Activated naive CD8-positive, alpha-beta T cell treated with anti-CD3 and anti-CD28 coated beads, Interleukin-2, amount 10 ng/mL, durations not matched to agents 7 days and 5 days (primary cell): ENCODE measurements at regions of chr12 and their contacts with region 1.

Region 1: GRCh38 chr12:56359851-56360767 is at the start of gene STAT2:
- DNase-seq: peak; percentile 99
- ATAC-seq: peak; percentile 95
- H3K4me3 Mint-ChIP-seq: peak within 1 kb of the TSS; percentile 98
- H3K27ac Mint-ChIP-seq: peak within 1 kb of the TSS; percentile 98
- H3K4me1 Mint-ChIP-seq: peaks cover 25% of the 10 kb centered on the region
- H3K27me3 Mint-ChIP-seq: no peaks in the 10 kb centered on the region
- total RNA-seq, gene STAT2: 263 to 275 TPM

Region 2: DNA sequence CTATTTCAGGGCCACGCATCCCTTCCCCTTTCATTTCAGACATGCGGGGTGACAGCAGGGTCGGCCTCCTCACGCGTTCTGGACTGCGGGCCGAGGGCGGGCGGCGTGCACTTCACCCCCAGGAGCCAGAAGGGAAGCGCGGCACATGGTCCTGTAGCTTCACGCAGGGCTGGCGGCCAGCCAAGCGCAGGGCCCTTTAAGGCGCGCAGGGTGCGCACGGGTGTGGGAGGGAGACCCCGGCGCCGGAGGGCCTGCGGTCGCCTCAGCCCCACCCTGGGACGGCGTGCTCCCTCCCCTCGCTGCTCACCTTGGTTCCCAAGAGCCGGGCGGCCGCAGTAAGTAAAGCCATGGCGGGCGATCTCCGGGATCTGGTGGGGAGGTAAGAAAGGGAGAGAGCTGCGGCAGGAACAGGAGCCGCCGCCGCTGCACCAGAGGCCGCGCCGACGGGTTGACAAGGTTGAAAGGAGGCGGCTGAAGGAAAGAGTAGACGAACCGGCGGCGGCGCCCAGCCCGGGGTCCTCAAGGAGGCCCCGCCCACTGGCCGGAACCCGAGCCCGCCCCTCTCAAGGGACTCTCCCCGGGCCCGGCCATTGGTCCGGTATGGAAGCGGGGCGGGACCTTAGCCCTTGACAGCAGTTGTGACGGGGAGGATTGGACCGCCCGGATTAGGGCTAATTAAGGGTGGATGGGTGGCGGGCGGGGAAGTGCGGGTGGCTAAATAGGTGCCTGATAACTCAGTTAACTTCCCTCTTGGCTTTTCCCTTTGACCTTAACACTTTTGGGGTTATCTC is 60.1 kb before region 1 on chr12 and contains the start of gene CS:
- POLR2A ChIA-PET with region 1: interaction called, 10 read pairs
- DNase-seq: peak; percentile 98
- ATAC-seq: peak; percentile 96
- H3K4me3 Mint-ChIP-seq: peak within 1 kb of the TSS; percentile 96
- H3K27ac Mint-ChIP-seq: peak within 1 kb of the TSS; percentile 92
- H3K4me1 Mint-ChIP-seq: peaks cover 35% of the 10 kb centered on the region
- H3K27me3 Mint-ChIP-seq: no peaks in the 10 kb centered on the region
- total RNA-seq, gene CS: 165 to 176 TPM

Region 3: DNA sequence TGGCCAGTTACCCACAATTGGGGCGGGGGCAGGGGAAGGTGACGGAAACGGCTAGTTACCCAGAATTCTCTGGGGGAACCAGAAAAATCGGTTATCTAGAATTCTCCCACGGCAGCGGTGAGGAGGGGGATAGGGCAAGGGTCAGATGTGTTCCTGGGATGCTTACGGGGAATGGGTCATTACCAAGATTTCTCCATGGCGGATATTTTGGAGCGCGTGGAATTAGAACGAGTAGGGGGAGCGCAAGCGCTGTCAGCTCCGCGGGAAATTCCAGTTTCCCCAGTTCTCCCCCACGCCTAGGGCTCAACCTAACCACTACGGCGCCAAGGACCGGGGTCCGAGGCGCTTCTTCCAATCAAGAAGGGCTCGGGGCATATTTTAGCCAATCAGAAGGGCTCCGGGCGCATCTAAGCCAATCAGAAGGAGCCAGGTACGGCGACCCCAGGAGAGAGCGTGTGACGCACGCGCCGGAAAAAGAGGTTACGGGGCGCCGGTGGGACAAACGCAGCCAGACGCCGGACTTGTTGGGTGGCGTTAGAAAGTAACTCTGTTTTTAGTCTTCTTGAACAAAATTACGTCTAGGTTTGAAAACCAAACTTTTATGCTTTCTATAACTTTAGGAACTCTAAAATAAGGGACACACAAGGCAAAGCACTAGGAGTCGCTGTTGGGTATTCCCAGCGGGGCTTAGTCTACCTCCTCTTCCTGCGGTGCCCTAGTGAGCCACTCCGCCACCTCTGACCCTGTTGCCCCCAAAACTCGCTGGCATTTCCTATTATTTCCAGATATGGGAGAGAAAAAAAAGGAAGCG is 26.2 kb before region 1 on chr12 and contains the start of gene PAN2:
- POLR2A ChIA-PET with region 1: interaction called, 153 read pairs
- DNase-seq: peak; percentile 89
- ATAC-seq: peak; percentile 91
- H3K4me3 Mint-ChIP-seq: peak within 1 kb of the TSS; percentile 92
- H3K27ac Mint-ChIP-seq: peak within 1 kb of the TSS; percentile 94
- H3K4me1 Mint-ChIP-seq: peaks cover 32% of the 10 kb centered on the region
- H3K27me3 Mint-ChIP-seq: no peaks in the 10 kb centered on the region
- total RNA-seq, gene PAN2: 106 to 115 TPM

Region 4: GRCh38 chr12:56448860-56449621 is 88.9 kb after region 1 on chr12 and contains the start of gene TIMELESS:
- POLR2A ChIA-PET with region 1: interaction called, 27 read pairs
- DNase-seq: peak; percentile 90
- ATAC-seq: peak; percentile 98
- H3K4me3 Mint-ChIP-seq: peak within 1 kb of the TSS; percentile 92
- H3K27ac Mint-ChIP-seq: peak within 1 kb of the TSS; percentile 85
- H3K4me1 Mint-ChIP-seq: peaks cover 27% of the 10 kb centered on the region
- H3K27me3 Mint-ChIP-seq: peaks cover 2% of the 10 kb centered on the region
- total RNA-seq, gene TIMELESS: 40.1 to 47.1 TPM